ENCODE measurements at regions of chr17 and their contacts with region 1.

Region 1: GRCh38 chr17:48678141-48678971 is 44.0 kb downstream of the PRAC1 start:
- DNase-seq: peak; percentile 78
- ATAC-seq: peak; percentile 98
- H3K4me3 Mint-ChIP-seq: no peak overlapping the region
- H3K27ac Mint-ChIP-seq: no peak overlapping the region
- H3K4me1 Mint-ChIP-seq: peaks cover 13% of the 10 kb centered on the region
- H3K27me3 Mint-ChIP-seq: peaks cover 59% of the 10 kb centered on the region

Region 2: GRCh38 chr17:48646183-48647102 is 31.9 kb before region 1 on chr17:
- CTCF ChIA-PET with region 1: interaction called, 11 read pairs
- DNase-seq: peak; percentile 69
- ATAC-seq: peak; percentile 80
- H3K4me3 Mint-ChIP-seq: peak overlapping the region; percentile 89
- H3K27ac Mint-ChIP-seq: peak overlapping the region; percentile 87
- H3K4me1 Mint-ChIP-seq: peaks cover 55% of the 10 kb centered on the region
- H3K27me3 Mint-ChIP-seq: peaks cover 62% of the 10 kb centered on the region

Region 3: GRCh38 chr17:48718761-48719641 is 40.6 kb after region 1 on chr17:
- CTCF ChIA-PET with region 1: interaction called, 31 read pairs
- DNase-seq: no peak
- ATAC-seq: no peak
- H3K4me3 Mint-ChIP-seq: peak overlapping the region; percentile 28
- H3K27ac Mint-ChIP-seq: peak overlapping the region; percentile 68
- H3K4me1 Mint-ChIP-seq: peaks cover 21% of the 10 kb centered on the region
- H3K27me3 Mint-ChIP-seq: peaks cover 90% of the 10 kb centered on the region

Region 4: GRCh38 chr17:48753794-48754499 is 75.6 kb after region 1 on chr17:
- CTCF ChIA-PET with region 1: interaction called, 11 read pairs
- DNase-seq: no peak
- ATAC-seq: no peak
- H3K4me3 Mint-ChIP-seq: no peak overlapping the region
- H3K27ac Mint-ChIP-seq: peak overlapping the region; percentile 5
- H3K4me1 Mint-ChIP-seq: no peaks in the 10 kb centered on the region
- H3K27me3 Mint-ChIP-seq: peaks cover 92% of the 10 kb centered on the region

Region 5: GRCh38 chr17:48804925-48805411 is 126.6 kb after region 1 on chr17:
- CTCF ChIA-PET with region 1: interaction called, 18 read pairs
- DNase-seq: peak; percentile 74
- ATAC-seq: peak; percentile 91
- H3K4me3 Mint-ChIP-seq: no peak overlapping the region
- H3K27ac Mint-ChIP-seq: no peak overlapping the region
- H3K4me1 Mint-ChIP-seq: peaks cover 2% of the 10 kb centered on the region
- H3K27me3 Mint-ChIP-seq: peaks cover 31% of the 10 kb centered on the region

Region 6: GRCh38 chr17:48892940-48893645 is 214.7 kb after region 1 on chr17:
- CTCF ChIA-PET with region 1: interaction called, 11 read pairs
- DNase-seq: no peak
- ATAC-seq: no peak
- H3K4me3 Mint-ChIP-seq: peak overlapping the region; percentile 88
- H3K27ac Mint-ChIP-seq: peak overlapping the region; percentile 94
- H3K4me1 Mint-ChIP-seq: peaks cover 43% of the 10 kb centered on the region
- H3K27me3 Mint-ChIP-seq: no peaks in the 10 kb centered on the region